Common myeloid progenitor, CD34-positive (primary cell): ENCODE measurements at regions of chr6 and their contacts with region 1.

Region 1: DNA sequence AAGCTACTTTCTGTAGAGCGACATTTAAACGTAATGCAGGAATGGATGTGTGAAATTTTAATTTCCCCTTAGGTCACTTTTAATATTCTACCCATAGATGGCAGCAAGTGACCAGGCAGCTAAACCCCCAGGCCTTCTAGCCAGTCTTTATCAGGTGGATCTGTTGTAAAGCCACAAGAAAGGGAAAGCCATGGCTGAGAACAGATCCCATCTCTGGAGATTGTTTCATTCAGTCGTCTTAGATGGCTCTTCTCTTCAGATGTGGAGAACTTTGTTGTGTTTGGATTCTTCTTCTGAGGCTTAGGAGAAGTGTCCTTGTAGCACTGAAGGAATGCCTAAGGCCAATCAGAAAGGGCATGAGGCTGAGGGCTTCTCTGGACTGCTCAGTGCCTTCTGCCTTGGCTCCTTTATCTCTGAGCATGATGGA is 15.8 kb upstream of the RNF182 start:
- DNase-seq: peak; percentile 79 to 85 (median 80)
- H3K4me3 ChIP-seq: no peak overlapping the region
- H3K27ac ChIP-seq: no peak overlapping the region
- H3K4me1 ChIP-seq: peaks cover 0 to 2% (median 0%) of the 10 kb centered on the region in 4 experiments
- H3K27me3 ChIP-seq: peaks cover 0 to 6% (median 0%) of the 10 kb centered on the region in 5 experiments

Region 2: DNA sequence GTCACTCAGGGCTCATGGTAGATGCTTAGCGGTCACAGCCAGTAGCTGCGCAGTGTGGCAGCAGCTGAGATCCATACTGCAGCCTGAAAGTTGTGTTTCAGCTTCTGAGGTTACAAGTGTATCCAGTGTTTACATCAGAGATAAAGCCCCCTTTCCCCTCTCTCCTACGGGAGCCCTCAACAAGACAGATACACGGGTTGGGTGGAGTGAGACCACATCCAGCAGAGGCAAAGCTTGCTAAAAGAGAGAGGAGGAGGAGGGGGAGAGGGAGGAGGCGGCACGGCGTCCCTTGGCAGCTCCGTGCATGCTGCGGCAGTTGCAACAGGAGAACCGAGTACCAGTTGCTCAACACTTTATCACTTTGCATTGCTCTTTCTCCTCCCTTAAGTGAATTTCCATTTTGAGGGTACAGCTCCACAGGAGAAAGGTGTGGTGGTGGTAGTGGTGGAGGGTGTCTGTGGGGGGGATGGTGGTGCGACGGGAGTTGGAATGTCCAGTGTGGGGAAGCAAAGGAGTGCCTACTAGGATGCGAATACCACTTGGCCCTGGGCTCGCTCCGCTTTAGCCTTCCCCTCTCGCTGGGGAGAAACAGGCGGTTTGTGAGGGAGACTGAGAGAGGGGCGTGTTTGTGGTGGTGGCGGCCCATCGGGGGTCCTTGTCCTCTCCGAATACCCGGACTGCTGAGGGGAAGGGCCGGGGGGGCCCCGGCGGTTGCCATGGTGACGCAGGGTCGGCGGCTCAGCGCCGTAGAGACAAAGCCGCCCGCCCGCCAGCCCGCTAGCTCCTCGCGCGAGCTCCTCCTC is 15.4 kb after region 1 on chr6:
- CTCF ChIA-PET with region 1: interaction called, 32 read pairs
- POLR2A ChIA-PET with region 1: no interaction called
- DNase-seq: peak in 2 of 3 donors; percentile 54 to 55
- H3K4me3 ChIP-seq: peak overlapping the region in 6 of 7 experiments; percentile 4 to 72 (median 54)
- H3K27ac ChIP-seq: peak overlapping the region in 1 of 2 experiments; percentile 36
- H3K4me1 ChIP-seq: peaks cover 6 to 15% (median 14%) of the 10 kb centered on the region in 4 experiments
- H3K27me3 ChIP-seq: peaks cover 29 to 69% (median 35%) of the 10 kb centered on the region in 5 experiments

Region 3: DNA sequence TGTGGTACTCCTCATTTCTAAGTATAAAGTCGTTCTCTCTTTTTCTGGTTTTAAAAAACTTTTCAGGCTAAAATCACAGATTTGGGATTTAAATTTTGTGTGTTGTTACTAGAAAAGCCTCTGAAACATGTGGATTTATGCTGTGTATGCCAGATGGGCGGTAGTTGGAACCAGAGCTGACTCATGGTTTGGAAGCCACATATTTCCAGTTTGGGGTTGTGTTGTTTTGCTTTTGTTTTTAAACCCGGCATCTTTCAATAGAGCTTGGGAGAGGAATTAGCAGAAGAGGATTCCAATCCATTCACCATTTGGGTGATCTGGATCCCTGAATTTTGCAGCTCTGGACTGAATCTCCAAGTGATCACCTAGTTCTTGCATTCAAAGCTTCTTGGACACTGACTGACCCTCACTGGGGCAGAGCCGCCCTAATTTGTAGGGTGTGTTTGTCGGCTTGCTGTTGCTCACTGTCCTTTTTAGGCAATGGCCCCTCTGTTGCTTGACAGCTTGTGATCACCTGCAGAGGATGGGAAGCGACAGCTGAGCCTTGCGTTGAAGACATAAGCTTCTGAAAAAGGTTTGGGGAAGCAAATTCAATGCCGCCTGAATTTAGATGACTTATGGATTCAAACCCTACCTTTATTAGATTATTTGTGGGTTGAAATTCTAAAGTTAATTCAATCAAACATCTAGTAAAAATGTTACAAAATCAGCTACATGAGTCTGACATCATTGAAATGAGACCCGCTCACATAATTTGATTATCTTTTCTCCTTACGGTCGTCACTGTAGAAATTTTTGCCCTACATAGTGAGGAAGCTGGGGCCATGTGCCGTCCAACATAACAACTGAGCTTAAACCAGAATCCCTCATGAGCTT is 128.7 kb after region 1 on chr6:
- CTCF ChIA-PET with region 1: interaction called, 14 read pairs
- POLR2A ChIA-PET with region 1: no interaction called
- DNase-seq: peak; percentile 48 to 88 (median 84)
- H3K4me3 ChIP-seq: peak overlapping the region in 2 of 7 experiments; percentile 12 to 48
- H3K27ac ChIP-seq: peak overlapping the region in 1 of 2 experiments; percentile 37
- H3K4me1 ChIP-seq: peaks cover 0 to 11% (median 4%) of the 10 kb centered on the region in 4 experiments
- H3K27me3 ChIP-seq: no peaks in the 10 kb centered on the region

Region 4: GRCh38 chr6:14046476-14047068 is 137.6 kb after region 1 on chr6:
- CTCF ChIA-PET with region 1: interaction called, 60 read pairs
- POLR2A ChIA-PET with region 1: no interaction called
- DNase-seq: peak; percentile 61 to 76 (median 69)
- H3K4me3 ChIP-seq: no peak overlapping the region
- H3K27ac ChIP-seq: no peak overlapping the region
- H3K4me1 ChIP-seq: no peaks in the 10 kb centered on the region
- H3K27me3 ChIP-seq: peaks cover 0 to 8% (median 2%) of the 10 kb centered on the region in 5 experiments

Region 5: GRCh38 chr6:14066782-14067406 is 157.9 kb after region 1 on chr6:
- CTCF ChIA-PET with region 1: interaction called, 32 read pairs
- POLR2A ChIA-PET with region 1: no interaction called
- DNase-seq: peak; percentile 58 to 75 (median 72)
- H3K4me3 ChIP-seq: no peak overlapping the region
- H3K27ac ChIP-seq: no peak overlapping the region
- H3K4me1 ChIP-seq: peaks cover 0 to 17% (median 7%) of the 10 kb centered on the region in 4 experiments
- H3K27me3 ChIP-seq: peaks cover 0 to 2% (median 0%) of the 10 kb centered on the region in 5 experiments

Region 6: GRCh38 chr6:14144678-14145113 is 235.7 kb after region 1 on chr6:
- CTCF ChIA-PET with region 1: interaction called, 11 read pairs
- POLR2A ChIA-PET with region 1: no interaction called
- DNase-seq: peak; percentile 80 to 85 (median 82)
- H3K4me3 ChIP-seq: no peak overlapping the region
- H3K27ac ChIP-seq: no peak overlapping the region
- H3K4me1 ChIP-seq: peaks cover 0 to 9% (median 0%) of the 10 kb centered on the region in 4 experiments
- H3K27me3 ChIP-seq: peaks cover 0 to 2% (median 0%) of the 10 kb centered on the region in 5 experiments